ENCODE measurements at regions of chr19 and their contacts with region 1.

Region 1: DNA sequence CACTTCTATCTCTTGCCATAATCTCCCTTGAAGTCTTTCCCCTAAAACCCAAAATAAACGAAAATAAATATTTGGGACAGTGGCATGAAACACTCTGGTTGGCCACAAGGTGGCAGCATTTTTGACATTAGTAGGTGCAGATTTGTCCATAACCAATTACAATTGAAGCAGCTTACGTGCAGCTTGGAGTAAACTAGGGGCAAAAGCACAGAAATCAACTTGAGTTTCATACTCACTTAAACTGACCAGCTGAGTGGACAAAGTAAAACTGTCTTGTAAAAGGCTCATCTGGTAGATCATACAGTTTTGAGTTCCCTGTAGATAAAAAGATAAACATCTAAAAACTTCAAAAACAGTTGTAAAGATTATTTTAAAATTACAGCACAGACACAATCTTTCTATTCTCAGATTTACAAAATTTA is 18.8 kb downstream of the PDCD5 start:
- DNase-seq: peak; percentile 57
- H3K4me3 ChIP-seq: no peak overlapping the region
- H3K27ac ChIP-seq: no peak overlapping the region
- H3K4me1 ChIP-seq: no peaks in the 10 kb centered on the region
- H3K27me3 ChIP-seq: no peaks in the 10 kb centered on the region
- CTCF ChIP-seq: peak; percentile 67 to 75
- POLR2A ChIP-seq: no peak

Region 2: GRCh38 chr19:32566246-32566830 is 33.4 kb before region 1 on chr19:
- CTCF ChIA-PET with region 1: no interaction called
- POLR2A ChIA-PET with region 1: no interaction called
- dilution Hi-C with region 1: no loop called
- intact Hi-C with region 1: no loop called
- DNase-seq: no peak
- H3K4me3 ChIP-seq: no peak overlapping the region
- H3K27ac ChIP-seq: no peak overlapping the region
- H3K4me1 ChIP-seq: no peaks in the 10 kb centered on the region
- H3K27me3 ChIP-seq: no peaks in the 10 kb centered on the region
- CTCF ChIP-seq: no peak
- POLR2A ChIP-seq: no peak

Region 3: GRCh38 chr19:32580901-32581703 is 18.6 kb before region 1 on chr19 and contains the start of gene PDCD5:
- CTCF ChIA-PET with region 1: interaction called, 18 read pairs
- POLR2A ChIA-PET with region 1: no interaction called
- dilution Hi-C with region 1: no loop called
- intact Hi-C with region 1: no loop called
- DNase-seq: peak; percentile 94
- H3K4me3 ChIP-seq: peak within 1 kb of the TSS; percentile 57 to 83 (median 74)
- H3K27ac ChIP-seq: peak within 1 kb of the TSS; percentile 48
- H3K4me1 ChIP-seq: peaks cover 11% of the 10 kb centered on the region
- H3K27me3 ChIP-seq: peaks cover 0 to 2% of the 10 kb centered on the region in 2 experiments
- CTCF ChIP-seq: no peak
- POLR2A ChIP-seq: peak; percentile 85
- total RNA-seq, gene PDCD5: 154 and 168 TPM in 2 replicates

Measured in endothelial cell of umbilical vein (primary cell).